ENCODE measurements at regions of chr2 and their contacts with region 1.

Region 1: DNA sequence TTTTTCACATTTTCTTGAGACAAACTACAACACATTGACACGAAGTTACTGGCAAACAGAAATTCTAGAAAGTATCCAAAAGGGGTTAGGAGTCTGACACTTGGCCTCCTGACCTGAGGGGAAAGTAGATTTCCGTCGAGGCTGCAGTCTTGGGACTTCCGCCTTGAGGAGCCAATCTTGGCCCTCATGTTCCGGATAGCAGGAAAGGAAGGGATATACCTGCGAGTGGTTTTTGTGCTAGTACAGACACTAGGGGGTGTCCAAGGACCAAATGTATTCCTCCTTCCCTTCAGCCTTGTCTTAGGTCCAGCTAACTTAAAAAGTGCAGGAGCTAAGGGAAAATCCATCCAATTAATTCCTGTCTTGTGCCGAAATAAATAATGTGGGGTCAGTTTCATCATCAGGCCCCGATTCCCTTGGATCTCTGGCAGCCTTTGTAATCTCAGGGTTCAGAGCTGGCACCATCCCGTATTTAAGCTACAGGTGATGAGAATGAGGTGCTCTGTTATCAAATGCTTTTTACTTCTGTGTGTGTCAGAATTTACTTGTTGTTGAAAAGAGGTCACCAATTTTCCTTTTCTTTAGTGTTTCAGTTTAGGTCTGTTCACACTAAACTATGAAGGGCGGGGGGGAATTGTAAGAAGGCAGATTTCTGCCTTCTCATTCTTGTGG is 330.2 kb upstream of the FANCL start:
- DNase-seq: peak; percentile 44 to 87
- ATAC-seq: peak; percentile 99 to 100
- H3K4me3 ChIP-seq: no peak overlapping the region
- H3K27ac ChIP-seq: no peak overlapping the region
- H3K4me1 ChIP-seq: no peaks in the 10 kb centered on the region
- CTCF ChIP-seq: peak; percentile 86
- EP300 ChIP-seq: no peak
- POLR2A ChIP-seq: no peak
- RAD21 ChIP-seq: peak; percentile 95 to 96

Region 2: DNA sequence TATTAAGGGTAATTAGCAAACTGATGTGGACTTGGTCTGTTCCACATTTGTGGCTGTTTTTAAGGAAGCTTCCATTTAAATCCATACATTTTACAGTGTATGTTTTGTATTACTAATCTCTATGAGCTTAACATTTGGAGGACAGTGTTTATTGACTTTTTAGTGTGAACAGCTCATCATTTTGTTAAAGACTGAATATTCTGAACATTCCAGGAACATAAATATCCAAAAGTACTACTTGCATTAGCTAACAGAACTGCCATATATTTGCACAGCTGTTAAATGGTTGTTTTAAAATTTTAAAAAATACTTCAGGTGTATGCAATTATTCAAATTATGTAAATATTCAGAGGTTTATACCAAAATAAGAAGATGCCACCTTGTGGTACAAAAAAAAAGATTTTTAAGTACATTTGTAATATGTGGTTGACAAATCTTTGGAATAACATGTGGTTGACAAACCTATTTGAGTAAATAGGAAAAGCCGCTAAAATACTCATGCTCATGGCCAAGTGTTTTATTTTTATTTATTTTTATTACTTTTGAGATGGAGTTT is 109.5 kb after region 1 on chr2:
- CTCF ChIA-PET with region 1: interaction called, 19 read pairs
- POLR2A ChIA-PET with region 1: no interaction called
- DNase-seq: no peak
- ATAC-seq: no peak
- H3K4me3 ChIP-seq: no peak overlapping the region
- H3K27ac ChIP-seq: no peak overlapping the region
- H3K4me1 ChIP-seq: no peaks in the 10 kb centered on the region
- CTCF ChIP-seq: peak; percentile 45
- EP300 ChIP-seq: no peak
- POLR2A ChIP-seq: no peak
- RAD21 ChIP-seq: peak; percentile 38 to 54; a peak in 4 of 5 replicates